B cell (primary cell): ENCODE measurements at regions of chr12 and their contacts with region 1.

Region 1: DNA sequence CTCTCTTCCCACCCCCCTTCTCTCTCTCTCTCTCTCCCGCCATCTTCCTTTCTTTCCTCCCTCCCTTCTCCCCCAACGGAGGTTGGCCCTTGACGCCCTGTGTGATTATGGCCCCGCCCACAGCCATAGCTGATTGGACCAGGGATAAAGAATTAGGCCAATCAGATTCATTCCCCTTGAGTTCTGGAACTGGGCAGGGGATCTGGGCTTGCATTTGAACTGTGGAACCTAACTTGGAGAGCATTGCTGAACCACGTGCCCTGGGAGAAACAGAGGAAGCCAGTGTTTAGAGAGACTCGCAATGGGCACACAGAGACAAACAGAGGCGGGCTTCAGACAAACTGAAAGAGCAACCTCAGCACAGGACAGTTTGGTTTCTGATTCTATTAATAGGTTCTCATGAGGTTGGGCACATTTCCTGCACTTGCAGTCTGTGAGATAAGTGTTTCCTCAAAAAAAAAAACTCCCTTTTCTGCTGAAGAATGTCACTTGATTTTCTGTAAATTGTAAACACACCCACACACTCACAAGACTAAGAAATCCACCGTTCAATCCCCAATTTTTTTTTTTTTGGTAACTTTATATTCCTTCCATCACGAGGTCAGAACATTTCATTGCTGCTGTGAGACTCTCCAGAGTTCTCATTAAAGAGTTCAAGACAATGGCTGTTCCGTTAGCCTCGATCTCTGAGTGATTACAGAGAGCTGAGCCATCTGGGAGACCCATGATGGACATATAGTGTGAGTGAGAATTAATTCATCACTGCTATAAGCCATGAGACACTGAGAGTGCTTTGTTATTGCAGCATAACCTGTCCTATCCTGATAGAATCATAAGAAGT is 3.5 kb upstream of the P2RX7 start:
- DNase-seq: peak; percentile 91
- ATAC-seq: peak; percentile 86
- H3K4me3 ChIP-seq: peak overlapping the region; percentile 21 to 66 (median 30)
- H3K4me3 Mint-ChIP-seq: peak overlapping the region; percentile 82
- H3K27ac ChIP-seq: peak overlapping the region; percentile 91
- H3K27ac Mint-ChIP-seq: peak overlapping the region; percentile 92
- H3K4me1 ChIP-seq: peaks cover 42 to 50% of the 10 kb centered on the region in 2 donors
- H3K4me1 Mint-ChIP-seq: peaks cover 64% of the 10 kb centered on the region
- H3K27me3 ChIP-seq: no peaks in the 10 kb centered on the region
- H3K27me3 Mint-ChIP-seq: no peaks in the 10 kb centered on the region
- CTCF ChIP-seq: no peak

Region 2: GRCh38 chr12:120528861-120529525 is 600.2 kb before region 1 on chr12 and contains the start of gene COQ5:
- CTCF ChIA-PET with region 1: no interaction called
- POLR2A ChIA-PET with region 1: no interaction called
- intact Hi-C with region 1: loop called (anchors 1 kb)
- DNase-seq: peak; percentile 89
- ATAC-seq: peak; percentile 99
- H3K4me3 ChIP-seq: peak within 1 kb of the TSS; percentile 69 to 93 (median 88)
- H3K4me3 Mint-ChIP-seq: peak within 1 kb of the TSS; percentile 100
- H3K27ac ChIP-seq: peak within 1 kb of the TSS; percentile 75 to 86
- H3K27ac Mint-ChIP-seq: peak within 1 kb of the TSS; percentile 99
- H3K4me1 ChIP-seq: peaks cover 8 to 17% of the 10 kb centered on the region in 2 donors
- H3K4me1 Mint-ChIP-seq: peaks cover 23% of the 10 kb centered on the region
- H3K27me3 ChIP-seq: no peaks in the 10 kb centered on the region
- H3K27me3 Mint-ChIP-seq: no peaks in the 10 kb centered on the region
- CTCF ChIP-seq: no peak
- total RNA-seq, gene COQ5: 22.1 and 25.4 TPM in 2 replicates

Region 3: GRCh38 chr12:120978296-120979219 is 150.6 kb before region 1 on chr12 and contains the start of gene HNF1A:
- CTCF ChIA-PET with region 1: no interaction called
- POLR2A ChIA-PET with region 1: no interaction called
- intact Hi-C with region 1: no loop called
- DNase-seq: no peak
- ATAC-seq: no peak
- H3K4me3 ChIP-seq: no peak within 1 kb of the TSS
- H3K4me3 Mint-ChIP-seq: no peak within 1 kb of the TSS
- H3K27ac ChIP-seq: no peak within 1 kb of the TSS
- H3K27ac Mint-ChIP-seq: no peak within 1 kb of the TSS
- H3K4me1 ChIP-seq: no peaks in the 10 kb centered on the region
- H3K4me1 Mint-ChIP-seq: no peaks in the 10 kb centered on the region
- H3K27me3 ChIP-seq: no peaks in the 10 kb centered on the region
- H3K27me3 Mint-ChIP-seq: no peaks in the 10 kb centered on the region
- CTCF ChIP-seq: no peak
- total RNA-seq, gene HNF1A: not detected in 2 replicates

Region 4: DNA sequence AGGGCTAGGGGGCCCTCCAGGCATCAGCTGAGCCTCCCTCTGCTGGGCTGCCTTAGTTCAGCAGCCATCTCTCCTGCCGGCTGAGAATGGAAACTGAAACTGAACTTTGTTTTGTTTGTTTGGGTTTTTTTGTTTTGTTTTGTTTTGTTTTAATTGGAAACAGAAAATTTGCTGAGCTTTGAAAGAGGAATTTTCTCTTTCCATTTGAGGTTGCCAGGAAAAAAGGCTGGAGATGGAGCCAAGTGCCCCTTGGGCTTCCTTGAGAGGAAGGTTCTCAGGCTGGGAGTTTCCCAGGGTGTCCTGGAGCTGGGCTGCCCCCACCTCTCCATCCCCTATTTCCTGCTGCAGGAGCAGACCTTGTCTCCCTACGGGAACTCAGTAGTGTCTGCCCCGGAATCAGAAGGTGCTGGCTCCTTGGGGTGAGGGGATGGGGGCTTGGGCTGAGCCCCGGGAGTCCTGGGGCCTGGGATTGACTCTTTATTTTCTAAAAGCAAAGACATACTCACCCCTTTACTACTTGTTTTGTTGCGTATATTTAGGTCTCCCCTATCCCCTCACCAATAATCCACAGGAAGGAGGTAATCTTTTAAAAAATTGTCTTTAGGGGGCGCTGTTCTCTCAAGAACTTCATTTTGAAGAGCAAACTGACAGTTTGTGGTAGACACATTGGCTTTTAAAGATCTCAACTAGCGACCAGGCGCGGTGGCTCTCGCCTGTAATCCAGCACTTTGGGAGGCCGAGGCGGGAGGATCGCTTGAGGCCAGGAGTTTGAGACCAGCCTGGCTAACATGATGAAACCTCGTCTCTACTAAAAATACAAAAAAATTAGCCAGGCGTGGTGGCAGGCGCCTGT is 68.8 kb before region 1 on chr12:
- CTCF ChIA-PET with region 1: no interaction called
- POLR2A ChIA-PET with region 1: no interaction called
- intact Hi-C with region 1: loop called (anchors 1 kb)
- DNase-seq: peak; percentile 82
- ATAC-seq: peak; percentile 96
- H3K4me3 ChIP-seq: peak overlapping the region; percentile 47 to 65 (median 60)
- H3K4me3 Mint-ChIP-seq: peak overlapping the region; percentile 91
- H3K27ac ChIP-seq: peak overlapping the region; percentile 47 to 82
- H3K27ac Mint-ChIP-seq: peak overlapping the region; percentile 96
- H3K4me1 ChIP-seq: peaks cover 6 to 17% of the 10 kb centered on the region in 2 donors
- H3K4me1 Mint-ChIP-seq: peaks cover 11% of the 10 kb centered on the region
- H3K27me3 ChIP-seq: no peaks in the 10 kb centered on the region
- H3K27me3 Mint-ChIP-seq: no peaks in the 10 kb centered on the region
- CTCF ChIP-seq: peak; percentile 70

Region 5: DNA sequence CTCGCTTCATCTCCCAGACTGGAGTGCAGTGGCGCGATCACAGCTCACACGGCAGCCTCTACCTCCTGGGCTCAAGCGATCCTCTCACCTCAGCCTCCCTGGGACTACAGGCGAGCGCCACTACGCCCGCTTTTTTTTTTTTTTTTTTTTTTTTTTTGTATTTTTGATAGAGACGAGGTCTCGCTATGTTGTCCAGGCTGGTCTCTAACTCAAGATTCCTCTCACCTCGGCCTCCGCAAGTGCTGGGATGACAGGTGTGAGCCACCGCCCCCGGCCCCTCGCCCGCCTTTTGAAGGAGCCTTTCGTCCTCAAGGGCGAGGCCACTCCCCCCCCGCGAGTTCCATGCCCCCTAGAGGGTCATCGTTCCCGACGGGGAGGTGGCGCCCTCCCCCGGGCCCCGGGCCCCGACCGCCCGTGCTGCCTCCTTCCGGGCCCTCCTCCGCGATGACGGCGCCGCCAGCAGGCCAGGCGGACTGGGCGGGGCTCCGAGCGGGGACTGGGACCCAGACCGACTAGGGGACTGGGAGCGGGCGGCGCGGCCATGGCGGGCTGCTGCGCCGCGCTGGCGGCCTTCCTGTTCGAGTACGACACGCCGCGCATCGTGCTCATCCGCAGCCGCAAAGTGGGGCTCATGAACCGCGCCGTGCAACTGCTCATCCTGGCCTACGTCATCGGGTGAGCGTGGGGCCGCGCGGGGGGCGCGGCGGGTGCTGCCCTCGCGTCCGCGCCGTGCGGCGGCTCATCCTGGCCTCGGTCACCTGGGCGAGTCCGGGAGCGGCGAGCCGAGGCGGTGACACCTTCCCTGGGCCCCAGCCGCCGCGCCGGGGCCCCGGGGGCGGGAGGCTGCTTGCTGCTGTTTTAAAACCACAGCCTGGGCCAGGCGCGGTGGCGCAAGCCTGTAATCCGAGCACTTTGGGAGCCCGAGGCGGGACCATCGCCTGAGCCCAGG is 80.7 kb after region 1 on chr12 and contains the start of gene P2RX4:
- CTCF ChIA-PET with region 1: no interaction called
- POLR2A ChIA-PET with region 1: interaction called, 4 read pairs
- intact Hi-C with region 1: loop called (anchors 1 kb)
- DNase-seq: peak; percentile 94
- ATAC-seq: peak; percentile 90
- H3K4me3 ChIP-seq: peak within 1 kb of the TSS in 4 of 5 experiments; percentile 70 to 85 (median 76)
- H3K4me3 Mint-ChIP-seq: peak within 1 kb of the TSS; percentile 88
- H3K27ac ChIP-seq: peak within 1 kb of the TSS; percentile 72 to 89
- H3K27ac Mint-ChIP-seq: peak within 1 kb of the TSS; percentile 88
- H3K4me1 ChIP-seq: peaks cover 4 to 13% of the 10 kb centered on the region in 2 donors
- H3K4me1 Mint-ChIP-seq: peaks cover 14% of the 10 kb centered on the region
- H3K27me3 ChIP-seq: no peaks in the 10 kb centered on the region
- H3K27me3 Mint-ChIP-seq: no peaks in the 10 kb centered on the region
- CTCF ChIP-seq: peak; percentile 36
- total RNA-seq, gene P2RX4: 27.2 and 30.4 TPM in 2 replicates

Region 6: DNA sequence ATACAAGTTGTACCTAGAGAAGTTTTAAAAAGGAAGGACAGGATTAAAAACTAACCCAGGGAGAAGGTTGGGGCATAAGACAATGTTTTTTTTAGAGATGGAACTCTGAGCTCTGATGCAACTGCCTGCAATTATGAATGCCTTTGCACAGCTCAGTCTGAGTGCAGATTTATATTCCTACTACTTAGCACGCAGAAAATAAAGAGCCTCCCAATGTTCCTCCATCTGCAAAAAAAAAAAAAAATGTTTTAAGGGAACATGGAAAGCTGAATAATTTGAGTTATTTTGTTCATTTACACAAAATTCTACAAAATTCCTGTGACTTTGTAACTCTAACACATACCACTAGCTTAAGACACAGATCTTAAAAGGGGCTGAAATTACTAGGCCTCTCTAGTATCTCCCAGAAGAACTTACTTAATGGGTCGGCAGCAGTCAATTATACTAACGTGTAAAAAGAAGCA is 1277.5 kb after region 1 on chr12:
- CTCF ChIA-PET with region 1: no interaction called
- POLR2A ChIA-PET with region 1: interaction called, 15 read pairs
- intact Hi-C with region 1: no loop called
- DNase-seq: no peak
- ATAC-seq: no peak
- H3K4me3 ChIP-seq: no peak overlapping the region
- H3K4me3 Mint-ChIP-seq: no peak overlapping the region
- H3K27ac ChIP-seq: peak overlapping the region in 1 of 2 donors; percentile 48
- H3K27ac Mint-ChIP-seq: peak overlapping the region; percentile 59
- H3K4me1 ChIP-seq: peaks cover 22 to 35% of the 10 kb centered on the region in 2 donors
- H3K4me1 Mint-ChIP-seq: peaks cover 37% of the 10 kb centered on the region
- H3K27me3 ChIP-seq: no peaks in the 10 kb centered on the region
- H3K27me3 Mint-ChIP-seq: no peaks in the 10 kb centered on the region
- CTCF ChIP-seq: no peak